Activated T-helper 2 cell treated with anti-CD3 and anti-CD28 coated beads, Interferon-gamma antibody, Interleukin-2, Interleukin-4, amounts not matched to agents 10 μg/mL and 5 μg/mL and 100 μg/mL, durations not matched to agents 14 hours and 24 hours and 36 hours (primary cell): ENCODE measurements at regions of chr2 and their contacts with region 1.

Region 1: GRCh38 chr2:143705108-143705686 is 576.0 kb downstream of the ARHGAP15 start:
- DNase-seq: no peak
- H3K4me3 Mint-ChIP-seq: no peak overlapping the region
- H3K27ac Mint-ChIP-seq: peak overlapping the region; percentile 59
- H3K4me1 Mint-ChIP-seq: peaks cover 23% of the 10 kb centered on the region
- H3K27me3 Mint-ChIP-seq: no peaks in the 10 kb centered on the region

Region 2: DNA sequence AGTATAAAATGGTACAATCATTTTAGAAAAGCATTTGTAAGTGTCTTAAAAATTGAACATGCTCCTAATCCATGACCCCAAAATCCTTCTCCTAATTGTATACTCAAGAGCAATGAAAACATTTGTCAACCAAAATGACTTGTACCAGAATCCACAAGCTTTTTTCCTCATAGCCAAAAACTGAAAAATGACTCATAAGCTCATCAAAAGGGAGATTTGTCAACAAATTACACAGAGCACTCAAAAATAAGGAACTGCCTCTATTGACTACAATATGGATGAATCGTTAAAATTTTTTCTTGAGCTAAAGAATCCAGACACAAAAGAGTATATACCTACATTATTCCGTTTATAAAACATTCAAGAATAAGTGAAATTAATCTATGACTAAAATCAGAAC is 31.1 kb before region 1 on chr2:
- intact Hi-C with region 1: loop called (anchors 2 kb)
- DNase-seq: no peak
- H3K4me3 Mint-ChIP-seq: no peak overlapping the region
- H3K27ac Mint-ChIP-seq: peak overlapping the region; percentile 47
- H3K4me1 Mint-ChIP-seq: peaks cover 10% of the 10 kb centered on the region
- H3K27me3 Mint-ChIP-seq: no peaks in the 10 kb centered on the region

Region 3: GRCh38 chr2:143730155-143730952 is 25.2 kb after region 1 on chr2:
- intact Hi-C with region 1: loop called (anchors 1 kb)
- DNase-seq: no peak
- H3K4me3 Mint-ChIP-seq: peak overlapping the region; percentile 9
- H3K27ac Mint-ChIP-seq: peak overlapping the region; percentile 67
- H3K4me1 Mint-ChIP-seq: peaks cover 24% of the 10 kb centered on the region
- H3K27me3 Mint-ChIP-seq: no peaks in the 10 kb centered on the region

Region 4: DNA sequence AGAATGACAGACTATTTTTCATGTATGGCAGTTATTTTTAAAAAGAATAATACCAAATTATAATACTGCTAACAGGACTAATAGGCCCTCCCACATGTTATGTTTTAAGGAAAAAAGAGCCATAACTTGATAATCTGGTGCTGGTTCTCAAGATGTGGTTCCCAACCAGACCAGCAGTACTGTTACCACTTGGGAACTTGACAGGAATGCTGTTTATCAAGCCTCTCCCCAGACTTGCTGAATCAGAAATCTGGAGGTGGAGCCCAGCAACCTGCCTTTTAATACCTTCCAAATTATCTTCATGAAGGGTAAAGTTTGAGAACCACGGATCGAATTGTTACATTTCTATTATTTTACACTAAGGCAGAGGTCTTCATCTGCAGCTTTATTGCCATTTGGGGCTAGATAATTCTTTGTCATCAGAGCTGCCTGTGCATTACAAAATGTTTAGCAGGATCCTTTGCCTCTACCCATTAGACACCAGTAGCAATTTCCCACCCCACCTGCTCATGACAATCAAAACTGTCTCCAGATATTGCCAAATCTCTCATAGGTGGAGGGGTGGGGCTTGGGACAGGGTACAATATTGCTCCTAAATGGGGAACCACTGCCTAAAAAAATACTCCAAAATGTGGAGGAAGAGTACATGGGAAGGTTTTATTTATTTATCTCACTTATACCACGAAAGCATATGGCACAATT is 53.6 kb after region 1 on chr2:
- intact Hi-C with region 1: no loop called
- DNase-seq: no peak
- H3K4me3 Mint-ChIP-seq: no peak overlapping the region
- H3K27ac Mint-ChIP-seq: no peak overlapping the region
- H3K4me1 Mint-ChIP-seq: peaks cover 2% of the 10 kb centered on the region
- H3K27me3 Mint-ChIP-seq: no peaks in the 10 kb centered on the region

Region 5: GRCh38 chr2:143779021-143779420 is 73.8 kb after region 1 on chr2:
- intact Hi-C with region 1: no loop called
- DNase-seq: no peak
- H3K4me3 Mint-ChIP-seq: no peak overlapping the region
- H3K27ac Mint-ChIP-seq: no peak overlapping the region
- H3K4me1 Mint-ChIP-seq: no peaks in the 10 kb centered on the region
- H3K27me3 Mint-ChIP-seq: peaks cover 9% of the 10 kb centered on the region

Region 6: DNA sequence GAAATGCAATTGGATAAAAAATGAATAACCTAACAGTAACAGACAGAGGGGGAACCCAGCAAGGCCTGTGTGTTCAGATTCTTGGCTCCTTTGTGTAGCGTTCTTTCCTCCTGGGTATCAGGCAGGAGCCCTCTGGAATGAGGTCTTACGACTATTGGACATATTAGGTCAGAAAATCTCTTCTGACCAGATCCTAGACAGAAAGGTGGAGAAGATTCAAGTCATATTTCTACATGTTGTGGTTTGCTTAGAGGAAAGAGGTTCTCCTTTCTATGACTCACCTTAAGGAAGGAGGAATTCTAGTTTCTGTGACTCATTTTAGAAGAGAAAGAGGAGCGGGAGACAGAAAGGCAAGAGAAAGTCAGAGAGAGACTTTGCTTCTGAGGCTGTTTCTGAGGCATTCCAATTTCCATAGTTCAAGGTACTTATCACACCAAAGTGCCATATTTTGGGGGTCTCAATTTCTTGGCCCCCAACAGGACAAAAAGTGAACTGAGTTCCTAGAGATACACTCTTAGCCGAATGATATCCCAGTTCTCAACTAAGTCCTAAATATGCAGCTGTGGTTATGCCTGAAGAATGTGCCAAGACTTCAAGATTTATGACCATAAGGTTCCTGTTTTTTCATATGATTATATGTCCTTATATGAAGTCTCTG is 196.1 kb after region 1 on chr2:
- intact Hi-C with region 1: loop called (anchors 1 kb)
- DNase-seq: no peak
- H3K4me3 Mint-ChIP-seq: no peak overlapping the region
- H3K27ac Mint-ChIP-seq: no peak overlapping the region
- H3K4me1 Mint-ChIP-seq: peaks cover 16% of the 10 kb centered on the region
- H3K27me3 Mint-ChIP-seq: peaks cover 34% of the 10 kb centered on the region

Region 7: DNA sequence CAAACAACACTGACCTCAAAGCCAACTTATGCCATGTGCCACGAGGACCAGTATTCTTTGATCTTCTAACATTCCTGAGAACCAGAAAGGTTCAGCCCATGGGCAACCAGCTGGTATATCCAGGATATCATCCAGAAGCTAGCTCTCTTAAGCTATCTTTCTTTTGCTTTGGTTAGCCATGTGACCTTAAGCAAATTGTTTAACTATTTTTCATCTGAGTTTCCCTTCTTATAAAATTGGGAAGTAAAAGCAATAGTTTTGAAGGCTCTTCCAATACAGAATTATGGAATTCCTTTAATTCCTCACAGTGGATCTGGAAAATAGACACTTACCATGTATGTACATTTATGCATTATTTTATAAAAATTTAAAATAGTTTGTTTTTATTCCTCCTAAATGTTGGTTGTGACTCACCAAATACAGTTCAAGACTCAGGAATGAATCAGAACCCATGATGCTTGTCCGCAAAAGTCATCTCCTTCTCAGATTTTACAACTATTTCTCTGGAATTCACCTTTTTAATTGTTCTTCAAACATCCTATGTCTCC is 379.0 kb after region 1 on chr2:
- intact Hi-C with region 1: loop called (anchors 10 kb)
- DNase-seq: no peak
- H3K4me3 Mint-ChIP-seq: no peak overlapping the region
- H3K27ac Mint-ChIP-seq: peak overlapping the region; percentile 23
- H3K4me1 Mint-ChIP-seq: peaks cover 31% of the 10 kb centered on the region
- H3K27me3 Mint-ChIP-seq: no peaks in the 10 kb centered on the region